HEK293 (cell line): ENCODE measurements at regions of chr1 and their contacts with region 1.

Region 1: GRCh38 chr1:156226116-156226538 is 13.3 kb downstream of the PMF1 start:
- H3K4me3 ChIP-seq: no peak overlapping the region
- H3K27ac ChIP-seq: no peak overlapping the region
- H3K4me1 ChIP-seq: no peaks in the 10 kb centered on the region
- CTCF ChIP-seq: no peak

Region 2: DNA sequence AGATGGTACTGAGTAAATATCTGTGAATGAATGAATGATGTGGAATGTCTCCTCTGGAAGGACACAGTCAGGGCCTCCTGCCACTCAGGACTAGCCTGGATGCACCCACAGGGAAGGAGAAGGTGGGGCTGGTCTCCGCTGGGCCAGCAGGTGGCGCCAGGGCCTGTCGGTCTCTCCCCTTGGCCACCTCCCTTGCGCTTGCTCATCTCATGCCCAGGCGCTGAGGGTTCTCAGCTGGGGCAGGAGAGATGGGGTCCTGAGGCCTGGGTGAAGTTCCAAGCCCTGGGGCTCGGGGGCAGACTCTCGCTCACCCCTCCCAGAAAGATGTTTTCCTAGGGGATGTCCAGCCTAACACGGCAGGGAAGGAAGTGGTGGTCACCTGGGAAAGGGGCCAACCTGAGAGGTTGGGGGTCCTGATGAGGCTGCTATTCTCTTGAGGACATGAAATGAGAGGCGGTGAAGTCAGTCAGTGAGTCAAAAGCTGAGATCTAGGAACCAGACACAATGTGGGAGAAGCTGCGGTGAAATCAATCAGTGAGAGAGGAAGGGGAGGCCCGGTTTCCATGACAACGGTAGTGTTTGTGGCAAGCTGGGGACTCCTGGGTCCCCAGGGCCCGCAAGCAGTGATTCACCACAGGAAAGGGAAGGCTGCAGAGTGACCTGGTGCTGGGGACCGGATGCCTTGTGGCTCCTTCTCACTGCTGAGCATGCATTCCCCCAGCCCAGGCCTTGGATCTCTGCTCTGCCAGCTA is 129.3 kb before region 1 on chr1:
- CTCF ChIA-PET with region 1: interaction called, 22 read pairs
- POLR2A ChIA-PET with region 1: interaction called, 3 read pairs
- H3K4me3 ChIP-seq: no peak overlapping the region
- H3K27ac ChIP-seq: no peak overlapping the region
- H3K4me1 ChIP-seq: no peaks in the 10 kb centered on the region
- CTCF ChIP-seq: peak; percentile 93

Region 3: DNA sequence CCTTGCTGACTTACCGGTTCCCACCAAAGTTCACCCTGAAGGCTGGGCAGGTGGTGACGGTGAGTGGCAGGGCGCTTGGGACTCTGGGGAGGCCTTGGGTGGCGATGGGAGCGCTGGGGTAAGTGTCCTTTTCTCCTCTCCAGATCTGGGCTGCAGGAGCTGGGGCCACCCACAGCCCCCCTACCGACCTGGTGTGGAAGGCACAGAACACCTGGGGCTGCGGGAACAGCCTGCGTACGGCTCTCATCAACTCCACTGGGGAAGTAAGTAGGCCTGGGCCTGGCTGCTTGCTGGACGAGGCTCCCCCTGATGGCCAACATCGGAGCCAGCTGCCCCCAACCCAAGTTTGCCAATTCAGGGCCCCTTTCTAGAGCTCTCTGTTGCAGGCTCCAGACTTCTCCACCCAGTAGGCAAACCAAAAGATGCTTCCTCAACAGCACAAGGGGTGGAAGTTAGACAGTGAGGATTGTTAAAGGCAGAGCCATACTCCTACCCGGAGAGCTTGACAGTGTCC is 89.1 kb before region 1 on chr1:
- CTCF ChIA-PET with region 1: interaction called, 210 read pairs
- POLR2A ChIA-PET with region 1: no interaction called
- H3K4me3 ChIP-seq: no peak overlapping the region
- H3K27ac ChIP-seq: no peak overlapping the region
- H3K4me1 ChIP-seq: no peaks in the 10 kb centered on the region
- CTCF ChIP-seq: peak; percentile 23; the same call in 1 of the 2 replicates

Region 4: DNA sequence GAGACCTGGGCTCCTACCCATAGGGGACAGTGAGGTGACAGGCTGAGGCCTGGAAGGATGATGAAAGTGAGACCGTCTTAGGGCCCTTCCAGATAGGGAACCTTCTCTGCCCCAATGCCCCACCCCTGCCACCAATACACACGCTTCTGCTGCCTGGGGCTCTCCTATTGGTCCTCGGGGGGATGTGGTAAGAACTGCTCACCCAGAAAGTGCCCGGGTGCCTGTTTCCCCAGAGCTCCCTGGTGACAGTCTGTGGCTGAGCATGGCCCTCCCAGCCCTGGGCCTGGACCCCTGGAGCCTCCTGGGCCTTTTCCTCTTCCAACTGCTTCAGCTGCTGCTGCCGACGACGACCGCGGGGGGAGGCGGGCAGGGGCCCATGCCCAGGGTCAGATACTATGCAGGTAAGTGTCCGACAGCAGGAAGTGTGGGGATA is 71.8 kb before region 1 on chr1:
- CTCF ChIA-PET with region 1: interaction called, 210 read pairs
- POLR2A ChIA-PET with region 1: interaction called, 3 read pairs
- H3K4me3 ChIP-seq: no peak overlapping the region
- H3K27ac ChIP-seq: no peak overlapping the region
- H3K4me1 ChIP-seq: no peaks in the 10 kb centered on the region
- CTCF ChIP-seq: no peak